Left cardiac atrium (tissue), 4 donors: ENCODE measurements at regions of chr13 and their contacts with region 1.

Region 1: DNA sequence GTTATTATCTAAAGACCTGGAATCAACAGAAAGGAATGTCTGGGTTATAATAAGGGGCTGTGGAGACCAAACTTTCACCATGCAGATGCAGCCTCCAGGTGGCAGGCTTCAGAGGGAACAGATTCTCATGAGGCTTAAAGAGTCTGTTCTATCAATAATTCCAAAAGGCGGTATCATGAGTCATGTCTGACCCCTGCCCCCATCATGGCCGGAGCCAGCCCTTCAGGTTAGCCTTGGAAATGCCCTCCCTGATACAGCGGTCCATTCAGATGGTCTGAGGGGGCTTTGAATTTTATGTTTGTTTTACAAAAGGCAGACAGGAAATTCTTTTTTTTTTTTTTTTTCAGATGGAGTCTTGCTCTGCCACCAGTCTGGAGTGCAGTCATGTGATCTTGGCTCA is 21.7 kb upstream of the LAMP1 start:
- DNase-seq: no peak
- ATAC-seq: peak; percentile 70 to 76

Region 2: DNA sequence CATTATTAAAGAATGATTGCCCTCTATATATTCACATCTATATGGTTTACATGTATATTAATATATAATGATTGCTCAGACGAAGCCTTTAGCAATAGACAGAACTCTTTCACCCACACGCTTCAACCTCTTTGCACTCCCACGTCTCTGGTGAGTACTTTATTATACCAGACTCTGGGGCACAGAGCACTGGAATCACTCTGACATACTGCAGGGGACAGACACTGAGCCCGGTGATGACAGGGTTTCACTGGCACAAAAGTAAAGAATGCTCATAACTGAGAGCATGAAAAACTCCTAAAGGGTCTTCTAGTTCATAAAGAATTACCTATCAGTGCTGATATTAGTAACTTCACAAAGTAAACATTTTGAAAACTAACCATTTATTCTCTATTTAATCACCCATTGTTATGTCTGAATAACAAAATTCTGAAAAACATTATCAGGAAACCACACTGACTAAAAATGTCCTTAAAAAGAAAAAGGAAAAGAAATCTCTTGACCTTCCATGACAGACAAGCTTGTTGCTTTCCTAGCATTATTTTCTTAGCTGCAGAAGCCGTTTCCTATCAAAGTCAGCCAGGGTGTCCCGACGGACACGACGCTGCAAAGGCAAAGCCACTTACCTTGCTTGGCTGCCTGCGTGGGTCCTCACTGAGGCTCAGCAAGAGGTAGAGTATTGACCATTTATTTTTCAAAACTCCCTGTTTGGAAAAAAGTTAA is 716.5 kb before region 1 on chr13:
- intact Hi-C with region 1: no loop called
- DNase-seq: no peak
- ATAC-seq: no peak

Region 3: GRCh38 chr13:113393563-113394338 is 118.4 kb after region 1 on chr13:
- intact Hi-C with region 1: loop called (anchors 5 to 10 kb)
- DNase-seq: peak; percentile 88
- ATAC-seq: peak; percentile 90 to 91